BJ (cell line): ENCODE measurements at regions of chr3 and their contacts with region 1.

Region 1: DNA sequence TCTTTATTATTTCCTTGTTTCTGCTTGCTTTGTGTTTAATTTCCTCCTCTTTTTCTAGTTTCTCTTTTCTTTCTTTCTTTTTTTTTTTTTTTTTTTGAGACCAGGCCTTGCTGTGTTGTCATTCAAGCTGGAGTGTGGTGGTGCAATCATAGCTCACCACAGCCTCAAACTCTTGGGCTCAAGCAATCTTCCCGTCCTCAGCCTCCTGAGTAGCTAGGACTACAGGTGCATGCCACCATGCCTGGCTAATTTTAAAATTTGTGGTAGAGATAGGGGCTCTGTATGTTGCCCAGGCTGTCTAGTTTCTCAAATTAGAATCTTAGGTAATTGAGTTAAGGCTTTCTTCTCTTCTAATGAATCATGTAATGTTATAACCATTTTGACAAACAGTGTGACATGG is 22.4 kb downstream of the SLMAP start:
- DNase-seq: no peak
- H3K4me3 ChIP-seq: no peak overlapping the region
- H3K27me3 ChIP-seq: no peaks in the 10 kb centered on the region
- CTCF ChIP-seq: no peak

Region 2: DNA sequence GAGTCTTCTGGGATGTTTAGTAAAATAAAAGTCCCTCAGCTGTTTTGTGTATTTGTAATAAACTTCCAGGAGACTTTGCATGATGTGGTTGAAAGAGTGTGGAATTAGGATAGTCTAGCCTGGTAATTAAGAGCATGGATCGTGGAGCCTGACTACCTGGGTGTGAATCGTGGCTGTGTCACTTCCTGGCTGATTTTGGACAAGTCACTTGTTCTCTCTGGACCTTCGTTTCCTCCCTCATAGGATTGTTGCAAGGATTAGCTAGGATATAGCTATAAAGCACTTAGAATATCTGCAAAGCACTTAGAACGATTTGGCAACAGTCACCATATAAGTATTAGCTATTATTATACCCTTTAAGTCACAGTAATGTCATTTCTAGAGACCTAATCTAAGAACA is 17.8 kb after region 1 on chr3:
- CTCF ChIA-PET with region 1: interaction called, 3 read pairs
- POLR2A ChIA-PET with region 1: interaction called, 11 read pairs
- DNase-seq: no peak
- H3K4me3 ChIP-seq: no peak overlapping the region
- H3K27me3 ChIP-seq: no peaks in the 10 kb centered on the region
- CTCF ChIP-seq: no peak

Region 3: GRCh38 chr3:57815036-57815435 is 36.5 kb after region 1 on chr3:
- CTCF ChIA-PET with region 1: no interaction called
- POLR2A ChIA-PET with region 1: no interaction called
- DNase-seq: no peak
- H3K4me3 ChIP-seq: no peak overlapping the region
- H3K27me3 ChIP-seq: no peaks in the 10 kb centered on the region
- CTCF ChIP-seq: no peak